ENCODE measurements at regions of chr6 and their contacts with region 1.

Region 1: DNA sequence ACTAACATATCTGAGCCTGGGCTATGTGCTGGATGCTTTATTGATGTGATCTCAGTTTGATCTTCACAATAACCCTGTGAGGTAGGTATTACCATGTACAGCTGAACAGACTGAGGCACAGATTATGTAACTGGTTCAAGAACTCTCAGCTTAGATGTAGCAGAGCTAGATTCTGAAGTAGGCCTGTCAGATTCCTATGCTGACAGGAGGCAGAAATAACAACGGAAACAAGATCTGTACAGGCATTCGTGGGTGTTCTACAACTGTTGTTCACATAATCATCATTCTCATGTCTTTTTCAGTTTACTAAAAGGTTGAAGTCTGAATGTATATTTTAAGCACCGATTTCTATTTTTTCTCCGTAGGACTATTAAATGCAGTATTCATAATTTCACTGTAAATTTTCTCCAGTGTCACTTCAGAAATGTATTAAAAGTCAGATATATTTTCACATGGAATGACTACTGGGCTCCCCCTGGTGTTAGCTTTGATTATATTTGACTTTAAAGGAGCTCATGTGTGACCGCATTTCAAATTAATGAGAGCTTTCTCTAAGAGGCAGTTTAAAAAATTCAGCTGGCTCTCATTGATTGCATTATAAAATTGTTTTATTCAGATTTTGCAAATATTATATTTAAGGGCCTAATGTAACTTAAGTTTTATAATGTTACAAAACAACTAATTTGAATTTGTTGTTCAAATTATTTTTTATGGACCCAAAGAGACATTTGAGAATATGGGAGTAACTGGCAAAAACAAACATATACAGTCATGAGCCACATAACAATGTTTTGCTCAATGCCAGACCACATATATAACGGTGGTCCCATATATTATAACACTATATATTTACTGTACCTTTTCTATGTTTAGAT is 36.4 kb upstream of the SLC17A4 start:
- DNase-seq: no peak
- H3K4me3 Mint-ChIP-seq: no peak overlapping the region
- H3K27ac Mint-ChIP-seq: no peak overlapping the region
- H3K4me1 Mint-ChIP-seq: no peaks in the 10 kb centered on the region
- H3K27me3 Mint-ChIP-seq: peaks cover 14% of the 10 kb centered on the region

Region 2: DNA sequence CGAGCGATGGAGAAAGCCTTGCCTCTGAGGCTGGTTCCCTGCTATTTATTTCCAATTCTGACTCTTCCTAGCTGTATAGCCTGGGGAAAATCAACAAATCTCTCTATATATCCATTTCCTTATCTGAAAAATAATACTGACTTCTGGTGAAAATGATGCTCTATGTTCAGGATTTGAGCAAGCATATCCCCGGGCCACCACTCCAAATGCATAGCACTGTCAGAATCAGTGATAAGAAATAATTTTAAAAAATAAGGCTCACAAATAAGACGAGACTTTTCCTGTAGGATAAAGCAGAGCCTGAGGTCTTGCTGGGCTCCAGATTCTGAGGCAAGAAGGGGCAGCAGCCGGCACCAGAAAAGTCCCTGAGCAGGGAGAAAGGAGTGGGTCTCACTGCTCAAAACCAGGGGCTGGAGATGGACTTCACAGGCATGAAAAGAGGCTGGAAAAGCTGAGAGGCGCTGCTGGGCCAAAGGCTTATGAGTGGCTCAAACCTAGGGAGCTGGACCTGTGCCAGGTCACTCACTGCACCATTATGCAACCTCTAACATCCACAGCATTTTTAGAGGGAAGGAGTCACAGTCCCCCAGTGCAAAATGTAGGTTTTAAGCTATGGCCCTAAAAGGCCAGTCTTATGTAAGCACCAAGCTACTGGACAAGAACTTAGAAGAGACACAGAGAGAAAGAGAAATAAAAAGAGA is 11.6 kb before region 1 on chr6:
- CTCF ChIA-PET with region 1: interaction called, 18 read pairs
- POLR2A ChIA-PET with region 1: no interaction called
- intact Hi-C with region 1: no loop called
- DNase-seq: no peak
- H3K4me3 Mint-ChIP-seq: no peak overlapping the region
- H3K27ac Mint-ChIP-seq: no peak overlapping the region
- H3K4me1 Mint-ChIP-seq: no peaks in the 10 kb centered on the region
- H3K27me3 Mint-ChIP-seq: peaks cover 3% of the 10 kb centered on the region

Region 3: GRCh38 chr6:25882051-25882496 is 164.0 kb after region 1 on chr6:
- CTCF ChIA-PET with region 1: interaction called, 10 read pairs
- POLR2A ChIA-PET with region 1: no interaction called
- intact Hi-C with region 1: no loop called
- DNase-seq: peak; percentile 53
- H3K4me3 Mint-ChIP-seq: peak overlapping the region; percentile 75
- H3K27ac Mint-ChIP-seq: no peak overlapping the region
- H3K4me1 Mint-ChIP-seq: peaks cover 2% of the 10 kb centered on the region
- H3K27me3 Mint-ChIP-seq: peaks cover 6% of the 10 kb centered on the region

Region 4: DNA sequence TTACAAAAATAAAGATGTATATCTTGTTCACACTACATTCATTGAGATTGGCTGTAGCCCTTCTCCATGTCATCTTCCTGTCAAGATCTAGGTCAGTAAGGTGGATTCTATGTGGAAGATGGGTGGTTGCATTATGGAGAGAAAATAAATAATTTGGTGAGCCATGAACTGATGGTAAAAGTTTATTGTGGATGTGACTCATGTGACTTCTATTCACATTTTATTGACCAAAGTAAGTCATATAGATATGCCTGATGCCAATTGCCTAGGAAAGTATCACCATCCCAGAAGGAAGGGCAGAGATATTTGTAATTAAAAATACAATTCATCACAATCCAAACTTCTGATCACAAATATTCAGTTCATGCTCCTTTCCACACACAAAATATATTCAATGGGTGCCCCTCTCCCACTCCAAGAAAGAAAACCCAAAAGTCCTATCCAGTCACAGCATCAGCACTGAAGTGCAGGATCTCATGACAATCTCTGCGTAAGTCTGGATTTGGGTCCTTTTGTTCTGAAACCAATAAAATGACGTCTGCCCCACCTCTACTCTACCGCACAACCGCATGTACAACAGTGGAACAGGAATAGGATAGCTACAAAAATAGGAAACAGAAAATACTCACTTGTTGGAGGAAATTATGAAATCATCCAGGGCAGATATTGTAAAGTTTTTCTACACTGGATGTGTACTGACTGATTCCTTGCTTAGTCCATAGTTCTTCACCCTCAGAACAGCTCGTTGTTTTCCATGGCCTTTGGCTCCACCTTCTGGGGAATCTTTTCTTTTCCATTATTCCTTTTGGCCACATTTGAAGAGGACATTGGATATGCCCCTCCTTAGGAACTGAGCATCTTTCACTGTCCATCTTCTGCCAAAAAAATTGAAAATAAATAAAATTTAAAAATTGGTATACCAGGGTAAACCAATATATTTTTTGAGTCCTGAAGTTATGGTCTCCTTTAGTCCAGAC is 172.1 kb after region 1 on chr6:
- CTCF ChIA-PET with region 1: interaction called, 14 read pairs
- POLR2A ChIA-PET with region 1: no interaction called
- intact Hi-C with region 1: loop called (anchors 2 kb)
- DNase-seq: peak; percentile 31
- H3K4me3 Mint-ChIP-seq: no peak overlapping the region
- H3K27ac Mint-ChIP-seq: no peak overlapping the region
- H3K4me1 Mint-ChIP-seq: no peaks in the 10 kb centered on the region
- H3K27me3 Mint-ChIP-seq: no peaks in the 10 kb centered on the region

Region 5: GRCh38 chr6:26003102-26003694 is 285.1 kb after region 1 on chr6:
- CTCF ChIA-PET with region 1: interaction called, 34 read pairs
- POLR2A ChIA-PET with region 1: no interaction called
- intact Hi-C with region 1: loop called (anchors 5 kb)
- DNase-seq: peak; percentile 54
- H3K4me3 Mint-ChIP-seq: no peak overlapping the region
- H3K27ac Mint-ChIP-seq: no peak overlapping the region
- H3K4me1 Mint-ChIP-seq: peaks cover 4% of the 10 kb centered on the region
- H3K27me3 Mint-ChIP-seq: no peaks in the 10 kb centered on the region

Measured in activated CD4-positive, alpha-beta memory T cell treated with anti-CD3 and anti-CD28 coated beads for 36 hours (primary cell).